WTC11 (cell line): ENCODE measurements at regions of chr17 and their contacts with region 1.

Region 1: GRCh38 chr17:7825206-7825990 is 8.6 kb upstream of the KDM6B start:
- DNase-seq: no peak
- ATAC-seq: no peak
- H3K4me3 Mint-ChIP-seq: no peak overlapping the region
- H3K27ac Mint-ChIP-seq: no peak overlapping the region
- H3K4me1 Mint-ChIP-seq: peaks cover 12% of the 10 kb centered on the region
- H3K27me3 Mint-ChIP-seq: peaks cover 60% of the 10 kb centered on the region
- CTCF ChIP-seq: no peak

Region 2: GRCh38 chr17:7727886-7728285 is 97.5 kb before region 1 on chr17:
- CTCF ChIA-PET with region 1: no interaction called
- POLR2A ChIA-PET with region 1: no interaction called
- DNase-seq: no peak
- ATAC-seq: no peak
- H3K4me3 Mint-ChIP-seq: no peak overlapping the region
- H3K27ac Mint-ChIP-seq: no peak overlapping the region
- H3K4me1 Mint-ChIP-seq: 0 out of 2 replicates have a peak, but pooled peaks cover 2% of the 10 kb centered on the region
- H3K27me3 Mint-ChIP-seq: peaks cover 2% of the 10 kb centered on the region; the same call in 1 of the 2 replicates
- CTCF ChIP-seq: no peak

Region 3: GRCh38 chr17:7782237-7782636 is 43.2 kb before region 1 on chr17:
- CTCF ChIA-PET with region 1: no interaction called
- POLR2A ChIA-PET with region 1: no interaction called
- DNase-seq: no peak
- ATAC-seq: no peak
- H3K4me3 Mint-ChIP-seq: no peak overlapping the region
- H3K27ac Mint-ChIP-seq: no peak overlapping the region
- H3K4me1 Mint-ChIP-seq: no peaks in the 10 kb centered on the region
- H3K27me3 Mint-ChIP-seq: peaks cover 5% of the 10 kb centered on the region; the same call in 1 of the 2 replicates
- CTCF ChIP-seq: no peak

Region 4: DNA sequence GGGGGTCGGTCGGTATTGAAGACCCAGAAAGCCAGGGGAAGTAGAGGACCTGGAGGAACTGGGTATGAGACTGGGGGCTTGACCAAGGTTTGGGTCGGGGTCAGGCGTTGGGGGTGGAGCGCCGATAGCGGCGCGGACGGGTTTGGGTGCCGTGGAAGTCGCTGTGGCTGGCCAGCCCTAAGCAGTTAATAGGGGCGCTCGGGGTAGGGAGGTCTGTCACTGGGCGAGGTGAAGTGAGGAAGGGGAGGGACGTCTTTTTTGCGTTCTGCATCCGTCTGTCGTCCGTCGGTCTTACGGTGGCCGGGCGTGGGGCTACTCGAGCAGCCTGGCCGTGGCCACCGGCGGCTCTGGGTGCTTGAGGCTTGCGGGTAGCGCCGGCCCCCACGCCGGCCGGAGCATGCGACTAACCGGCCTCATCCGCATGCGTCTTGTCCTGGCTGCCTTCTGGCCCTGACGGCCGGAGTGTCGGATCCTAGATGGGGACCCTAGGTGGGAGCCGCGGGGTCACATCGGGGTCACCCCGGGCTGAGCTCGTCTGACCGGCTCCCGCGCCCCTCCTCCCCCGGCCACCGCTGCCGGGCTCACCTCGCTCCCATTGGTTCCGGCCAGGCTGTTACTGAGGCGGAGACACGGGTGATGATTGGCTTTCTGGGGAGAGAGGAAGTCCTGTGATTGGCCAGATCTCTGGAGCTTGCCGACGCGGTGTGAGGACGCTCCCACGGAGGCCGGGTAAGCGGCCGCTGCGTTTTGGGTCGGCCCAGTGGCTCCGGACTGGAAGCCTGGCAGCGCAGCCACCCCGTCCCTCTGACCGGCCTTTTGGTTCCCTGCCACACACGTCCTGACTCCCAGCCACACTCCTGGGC is 19.1 kb after region 1 on chr17:
- CTCF ChIA-PET with region 1: interaction called, 14 read pairs
- POLR2A ChIA-PET with region 1: no interaction called
- DNase-seq: peak; percentile 89
- ATAC-seq: peak; percentile 81
- H3K4me3 Mint-ChIP-seq: peak overlapping the region; percentile 81
- H3K27ac Mint-ChIP-seq: no peak overlapping the region
- H3K4me1 Mint-ChIP-seq: peaks cover 21% of the 10 kb centered on the region
- H3K27me3 Mint-ChIP-seq: peaks cover 39% of the 10 kb centered on the region
- CTCF ChIP-seq: no peak